H1 (cell line): ENCODE measurements at regions of chr16 and their contacts with region 1.

Region 1: DNA sequence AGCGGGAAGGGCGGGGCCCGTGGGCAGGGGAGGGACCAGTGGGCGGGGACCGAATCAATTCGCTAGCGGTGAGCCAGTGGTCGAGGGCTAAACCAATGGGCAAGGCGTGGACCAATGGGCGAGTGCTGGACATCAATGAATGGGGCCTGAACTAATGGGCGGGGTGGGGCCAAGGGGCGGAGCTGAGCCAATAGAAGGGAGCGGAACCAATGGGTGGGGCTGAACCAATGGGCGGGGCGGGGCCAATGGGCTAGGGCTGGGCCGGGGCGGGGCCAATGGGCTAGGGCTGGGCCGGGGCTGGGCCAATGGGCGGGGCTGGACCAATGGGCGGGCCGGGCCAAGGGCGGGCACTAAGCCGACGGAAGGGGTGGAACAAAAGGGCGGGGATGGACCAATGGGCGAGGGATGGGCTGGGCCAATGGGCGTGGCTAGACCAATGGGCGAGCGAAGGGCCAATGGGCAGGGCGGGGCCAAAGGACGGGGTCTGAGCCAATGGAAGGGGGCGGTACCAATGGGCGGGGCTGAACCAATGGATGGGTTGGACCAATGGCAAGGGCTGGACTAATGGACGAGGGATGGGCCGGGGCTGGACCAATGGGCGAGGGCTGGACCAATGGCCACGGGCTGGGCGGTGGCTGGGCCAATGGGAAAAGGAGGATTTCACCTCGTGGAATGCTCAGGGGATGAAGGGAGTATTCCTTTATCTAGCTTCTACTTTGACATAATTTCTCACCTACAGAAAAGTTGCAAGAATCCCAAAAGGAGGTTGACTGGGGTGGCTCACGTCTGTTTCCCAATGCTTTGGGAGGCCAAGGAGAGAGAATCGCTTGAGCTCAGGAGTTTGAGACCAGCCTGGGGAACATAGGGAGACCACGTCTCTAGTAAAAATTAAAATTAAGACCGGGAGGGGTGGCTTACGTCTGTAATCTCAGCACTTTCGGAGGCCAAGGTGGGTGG is 6.0 kb upstream of the FLYWCH1 start:
- DNase-seq: peak; percentile 99 to 100
- H3K4me3 ChIP-seq: peak overlapping the region; percentile 56 to 85 (median 70); a peak in 6 of 8 replicates
- H3K27ac ChIP-seq: no peak overlapping the region
- H3K4me1 ChIP-seq: peaks cover 0 to 2% (median 0%) of the 10 kb centered on the region in 4 experiments; a peak in 2 of 7 replicates
- H3K27me3 ChIP-seq: no peaks in the 10 kb centered on the region
- CTCF ChIP-seq: no peak
- EP300 ChIP-seq: no peak
- POLR2A ChIP-seq: no peak
- RAD21 ChIP-seq: no peak

Region 2: DNA sequence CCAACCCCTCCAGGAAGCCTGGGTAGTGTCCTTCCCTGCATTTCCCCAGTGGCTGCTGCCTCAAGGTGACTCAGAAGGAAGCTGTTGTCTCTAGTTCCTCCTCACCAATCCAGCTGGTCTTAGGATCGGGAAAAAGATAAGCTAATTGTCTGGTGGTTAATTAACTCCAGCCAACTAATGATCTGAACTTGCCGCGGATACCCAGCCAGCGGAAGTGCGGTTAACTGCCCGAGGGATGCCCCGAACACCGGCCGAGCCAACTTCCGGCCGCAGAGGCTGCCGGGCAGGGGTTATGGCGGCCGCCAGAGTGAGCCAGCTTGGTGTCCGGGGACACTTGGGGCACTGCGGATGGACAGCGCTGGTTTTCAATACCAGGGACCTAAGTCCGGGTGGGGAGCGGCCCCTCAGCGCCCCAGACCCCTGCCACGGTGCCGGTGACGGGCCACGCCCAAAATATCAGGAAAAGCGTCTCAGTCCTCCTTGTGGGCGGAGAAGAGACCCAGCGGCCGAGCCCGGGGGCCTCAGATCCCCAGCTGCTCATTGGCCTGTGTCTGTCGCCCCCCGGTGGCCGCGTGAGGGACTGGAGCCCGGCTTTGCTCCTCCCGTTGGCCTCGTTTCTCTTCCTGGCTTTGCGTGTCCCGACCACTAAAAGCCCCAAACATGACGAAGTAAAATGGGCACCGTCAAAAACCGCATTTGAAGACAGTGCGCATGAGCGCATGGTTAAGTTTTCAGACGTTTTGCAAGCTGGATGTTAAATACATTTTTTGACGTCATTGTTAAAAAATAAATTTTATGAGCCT is 37.5 kb before region 1 on chr16:
- CTCF ChIA-PET with region 1: interaction called, 15 read pairs
- POLR2A ChIA-PET with region 1: interaction called, 4 read pairs
- DNase-seq: peak; percentile 83 to 99
- H3K4me3 ChIP-seq: peak overlapping the region; percentile 29 to 61 (median 57)
- H3K27ac ChIP-seq: peak overlapping the region; percentile 58; the same call in 1 of the 2 replicates
- H3K4me1 ChIP-seq: no peaks in the 10 kb centered on the region
- H3K27me3 ChIP-seq: peaks cover 7 to 40% (median 32%) of the 10 kb centered on the region in 4 experiments
- CTCF ChIP-seq: peak; percentile 89 to 98 (median 94)
- EP300 ChIP-seq: no peak
- POLR2A ChIP-seq: peak in 1 of 2 experiments; percentile 83; a peak in 2 of 3 replicates
- RAD21 ChIP-seq: peak; percentile 91 to 94

Region 3: DNA sequence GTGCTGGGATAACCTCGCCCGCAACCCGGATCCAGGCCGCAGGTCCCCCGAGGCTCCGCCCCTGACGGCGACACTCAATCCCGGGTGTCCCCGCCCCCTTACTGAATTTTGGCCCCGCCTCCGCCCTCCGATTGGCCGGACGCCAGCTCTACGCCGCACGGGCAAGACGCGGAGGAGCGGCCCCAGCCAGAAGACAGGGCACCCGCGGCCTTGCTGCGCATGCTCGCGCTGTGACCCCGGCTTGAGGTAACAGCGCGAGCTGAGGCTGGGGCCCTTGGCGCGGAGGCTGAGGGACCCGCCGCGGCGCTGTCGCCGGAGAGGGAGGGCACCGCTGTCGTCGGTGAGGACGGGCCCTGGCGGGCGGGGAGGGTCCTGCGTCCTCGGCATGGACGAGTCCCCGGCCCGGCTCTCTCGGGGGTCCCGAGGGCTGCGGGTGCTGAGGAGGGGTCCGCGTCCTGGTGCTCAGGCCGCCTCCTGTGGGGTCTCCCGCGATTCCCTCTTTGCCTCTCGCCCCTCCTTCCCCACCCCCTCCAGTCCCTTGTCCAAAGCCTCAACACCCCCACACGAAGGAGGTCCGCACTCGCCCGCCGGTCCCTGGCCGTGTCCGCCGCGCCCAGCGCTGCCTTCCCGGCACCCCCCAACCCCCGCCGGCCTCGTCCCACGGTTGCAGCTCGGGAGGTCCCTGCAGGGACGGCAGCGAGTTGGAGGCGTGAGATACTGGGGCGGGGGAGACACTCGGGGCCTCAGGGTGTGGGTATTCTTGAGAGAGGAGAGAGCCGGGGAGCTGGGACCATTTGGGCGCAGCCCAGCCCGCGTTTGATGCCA is 22.5 kb before region 1 on chr16 and contains the start of gene FLYWCH2:
- CTCF ChIA-PET with region 1: interaction called, 6 read pairs
- POLR2A ChIA-PET with region 1: interaction called, 11 read pairs
- DNase-seq: peak; percentile 92 to 100
- H3K4me3 ChIP-seq: peak within 1 kb of the TSS; percentile 81 to 89 (median 84)
- H3K27ac ChIP-seq: peak within 1 kb of the TSS; percentile 72; the same call in 1 of the 2 replicates
- H3K4me1 ChIP-seq: peaks cover 0 to 1% (median 0%) of the 10 kb centered on the region in 4 experiments; a peak in 3 of 7 replicates
- H3K27me3 ChIP-seq: no peaks in the 10 kb centered on the region; a peak in 1 of 7 replicates
- CTCF ChIP-seq: no peak
- EP300 ChIP-seq: no peak
- POLR2A ChIP-seq: 0 out of 3 replicates have a peak, but pooled peaks of 1 of the 2 experiments have one; percentile 39
- RAD21 ChIP-seq: no peak
- total RNA-seq, gene FLYWCH2: 16.4 and 20.2 TPM in 2 replicates

Region 4: DNA sequence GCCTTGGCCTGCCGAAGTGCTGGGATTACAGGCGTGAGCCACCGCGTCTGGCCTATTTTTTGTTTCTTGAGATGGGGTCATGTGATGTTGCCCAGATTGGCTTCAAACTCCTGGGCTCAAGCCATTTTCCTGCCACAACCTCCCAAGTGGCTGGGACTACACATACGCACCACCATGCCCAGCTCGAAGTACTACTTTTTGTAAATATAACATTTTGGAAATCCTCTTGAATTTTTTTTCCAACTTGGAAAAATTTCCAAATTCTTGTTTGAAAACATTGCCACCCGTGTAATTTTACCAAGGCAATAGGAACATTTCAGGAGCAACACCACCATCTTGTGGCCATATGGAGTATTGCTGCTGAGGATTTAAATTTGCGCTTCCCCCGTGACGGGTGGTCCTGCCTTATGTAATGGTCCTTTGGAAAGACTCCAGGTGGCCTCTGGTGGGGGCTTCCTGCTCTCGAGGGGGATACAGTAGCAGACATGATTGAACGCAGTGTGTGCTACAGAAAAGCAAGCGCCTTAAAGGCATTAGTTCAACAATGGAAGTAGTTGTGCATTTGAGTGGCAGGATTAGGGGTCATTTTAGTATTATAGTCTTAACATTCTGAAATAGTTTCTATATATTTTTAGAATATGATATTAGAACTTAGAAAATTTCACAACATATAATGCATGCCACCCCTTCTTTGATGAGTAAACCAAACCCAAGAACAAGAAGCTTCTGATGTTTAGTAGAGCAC is 14.0 kb after region 1 on chr16:
- CTCF ChIA-PET with region 1: interaction called, 98 read pairs
- POLR2A ChIA-PET with region 1: interaction called, 3 read pairs
- DNase-seq: peak in 1 of 2 experiments; percentile 83
- H3K4me3 ChIP-seq: no peak overlapping the region
- H3K27ac ChIP-seq: no peak overlapping the region
- H3K4me1 ChIP-seq: peaks cover 0 to 2% (median under 1%) of the 10 kb centered on the region in 4 experiments; a peak in 3 of 7 replicates
- H3K27me3 ChIP-seq: no peaks in the 10 kb centered on the region
- CTCF ChIP-seq: peak; percentile 55 to 85 (median 76)
- EP300 ChIP-seq: no peak
- POLR2A ChIP-seq: no peak
- RAD21 ChIP-seq: peak; percentile 83 to 84